Activated CD8-positive, alpha-beta T cell treated with anti-CD3 and anti-CD28 coated beads for 36 hours (primary cell): ENCODE measurements at regions of chr5 and their contacts with region 1.

Region 1: GRCh38 chr5:119267958-119268386 is 87.8 kb upstream of the TNFAIP8 start:
- DNase-seq: peak; percentile 97
- ATAC-seq: peak; percentile 80
- H3K4me3 Mint-ChIP-seq: peak overlapping the region; percentile 95
- H3K27ac Mint-ChIP-seq: peak overlapping the region; percentile 96
- H3K4me1 Mint-ChIP-seq: peaks cover 65% of the 10 kb centered on the region
- H3K27me3 Mint-ChIP-seq: no peaks in the 10 kb centered on the region
- CTCF ChIP-seq: peak; percentile 91

Region 2: DNA sequence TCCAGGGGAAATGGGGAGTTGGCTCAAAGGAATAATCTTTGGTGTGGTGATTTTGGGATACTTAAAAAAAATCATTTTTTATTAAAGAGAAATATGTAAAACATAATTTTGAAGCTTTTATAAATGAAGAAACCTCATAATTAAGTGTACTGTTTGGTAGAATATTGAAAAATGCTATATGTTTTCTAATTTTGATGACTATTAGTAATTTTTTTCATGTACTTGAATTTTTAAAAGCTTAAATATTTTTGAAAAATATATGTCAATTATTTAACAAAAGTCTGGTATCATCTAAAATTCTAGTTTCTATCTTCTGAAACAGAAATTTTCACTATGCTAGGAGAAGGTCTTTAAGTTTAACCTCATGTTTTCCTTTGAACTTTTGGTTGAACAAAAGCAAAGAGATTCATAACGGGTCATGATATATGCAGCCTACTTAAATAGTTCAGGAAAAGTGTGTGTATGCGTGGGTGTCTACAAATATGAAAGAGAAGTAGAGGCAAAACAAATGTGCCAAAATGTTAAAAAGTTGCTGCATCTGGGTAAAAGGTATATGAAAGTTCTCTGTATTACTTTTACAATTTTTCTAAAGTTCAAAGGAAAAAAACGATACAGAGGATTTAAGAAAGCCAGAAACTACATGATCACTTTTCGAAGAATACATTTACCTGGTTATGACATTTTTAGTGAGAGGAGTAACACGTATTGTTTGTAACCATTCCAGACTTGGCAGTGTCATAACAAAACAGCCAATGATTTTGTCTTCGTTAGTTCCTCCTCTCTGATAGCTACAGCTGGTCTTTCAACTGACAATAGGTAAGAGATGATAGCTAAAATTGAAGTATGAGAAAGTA is 29.5 kb before region 1 on chr5:
- CTCF ChIA-PET with region 1: interaction called, 18 read pairs
- POLR2A ChIA-PET with region 1: no interaction called
- intact Hi-C with region 1: no loop called
- DNase-seq: no peak
- ATAC-seq: peak; percentile 85
- H3K4me3 Mint-ChIP-seq: peak overlapping the region; percentile 53
- H3K27ac Mint-ChIP-seq: peak overlapping the region; percentile 82
- H3K4me1 Mint-ChIP-seq: peaks cover 23% of the 10 kb centered on the region
- H3K27me3 Mint-ChIP-seq: no peaks in the 10 kb centered on the region
- CTCF ChIP-seq: no peak

Region 3: DNA sequence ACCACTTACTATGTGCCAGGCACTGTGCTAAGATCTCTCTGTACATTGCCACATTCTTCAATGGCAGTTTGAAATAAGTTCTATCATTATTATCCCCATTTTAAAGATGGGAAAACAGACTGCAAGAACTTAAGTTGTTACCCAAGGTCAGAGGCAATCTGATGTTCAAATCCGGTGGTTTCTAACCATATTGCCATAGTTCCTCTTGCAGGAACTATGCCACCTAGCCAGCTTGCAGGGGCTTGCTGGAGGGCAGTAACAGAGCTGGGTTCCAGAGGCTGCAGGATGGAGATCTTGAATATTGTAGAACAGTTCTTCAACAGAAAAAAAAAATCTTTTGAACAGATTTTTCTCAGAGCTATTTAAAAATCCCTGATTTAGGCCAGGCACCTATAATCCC is 16.1 kb after region 1 on chr5:
- CTCF ChIA-PET with region 1: interaction called, 13 read pairs
- POLR2A ChIA-PET with region 1: interaction called, 3 read pairs
- intact Hi-C with region 1: no loop called
- DNase-seq: no peak
- ATAC-seq: no peak
- H3K4me3 Mint-ChIP-seq: no peak overlapping the region
- H3K27ac Mint-ChIP-seq: peak overlapping the region; percentile 81
- H3K4me1 Mint-ChIP-seq: peaks cover 99% of the 10 kb centered on the region
- H3K27me3 Mint-ChIP-seq: no peaks in the 10 kb centered on the region
- CTCF ChIP-seq: no peak

Region 4: GRCh38 chr5:119302916-119303897 is 35.2 kb after region 1 on chr5:
- CTCF ChIA-PET with region 1: interaction called, 11 read pairs
- POLR2A ChIA-PET with region 1: interaction called, 3 read pairs
- intact Hi-C with region 1: loop called (anchors 2 kb)
- DNase-seq: no peak
- ATAC-seq: peak; percentile 46
- H3K4me3 Mint-ChIP-seq: no peak overlapping the region
- H3K27ac Mint-ChIP-seq: peak overlapping the region; percentile 88
- H3K4me1 Mint-ChIP-seq: peaks cover 91% of the 10 kb centered on the region
- H3K27me3 Mint-ChIP-seq: no peaks in the 10 kb centered on the region
- CTCF ChIP-seq: no peak

Region 5: GRCh38 chr5:119315516-119315949 is 47.6 kb after region 1 on chr5:
- CTCF ChIA-PET with region 1: interaction called, 15 read pairs
- POLR2A ChIA-PET with region 1: interaction called, 4 read pairs
- intact Hi-C with region 1: no loop called
- DNase-seq: peak; percentile 84
- ATAC-seq: peak; percentile 79
- H3K4me3 Mint-ChIP-seq: peak overlapping the region; percentile 38
- H3K27ac Mint-ChIP-seq: peak overlapping the region; percentile 81
- H3K4me1 Mint-ChIP-seq: peaks cover 93% of the 10 kb centered on the region
- H3K27me3 Mint-ChIP-seq: no peaks in the 10 kb centered on the region
- CTCF ChIP-seq: peak; percentile 70

Region 6: DNA sequence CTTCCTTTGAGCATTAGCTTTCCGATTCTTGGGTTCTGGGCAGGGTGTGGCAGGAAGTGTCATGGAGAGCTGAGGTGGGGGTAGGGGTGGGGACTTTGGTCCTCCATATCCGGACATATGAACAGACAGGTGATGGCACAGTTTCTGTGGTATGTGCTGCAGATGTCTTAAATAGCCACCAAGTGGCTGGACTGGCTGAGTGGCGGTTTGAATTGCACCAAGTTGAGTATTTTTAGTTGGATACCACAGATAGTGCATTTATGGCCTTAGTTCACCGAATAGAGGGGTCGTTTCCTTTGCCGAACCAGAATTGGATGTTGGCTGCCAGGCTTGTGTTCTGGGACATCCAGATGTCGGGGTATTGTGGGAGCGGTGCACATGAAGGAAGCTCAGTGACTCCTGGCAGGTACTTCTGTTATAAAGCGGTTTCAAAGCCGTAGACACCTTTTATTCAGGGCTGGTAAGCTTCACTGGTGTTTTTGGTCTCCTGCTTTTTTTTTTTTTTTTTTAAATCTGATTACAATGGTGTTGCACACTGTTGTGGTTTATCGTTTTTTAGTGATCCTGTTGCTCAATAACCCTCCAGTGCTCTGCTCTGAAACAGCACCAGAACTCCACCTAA is 72.7 kb after region 1 on chr5:
- CTCF ChIA-PET with region 1: interaction called, 8 read pairs
- POLR2A ChIA-PET with region 1: interaction called, 12 read pairs
- intact Hi-C with region 1: no loop called
- DNase-seq: peak; percentile 83
- ATAC-seq: peak; percentile 38
- H3K4me3 Mint-ChIP-seq: peak overlapping the region; percentile 73
- H3K27ac Mint-ChIP-seq: peak overlapping the region; percentile 95
- H3K4me1 Mint-ChIP-seq: peaks cover 94% of the 10 kb centered on the region
- H3K27me3 Mint-ChIP-seq: no peaks in the 10 kb centered on the region
- CTCF ChIP-seq: no peak

Region 7: GRCh38 chr5:119445544-119445943 is 177.6 kb after region 1 on chr5:
- CTCF ChIA-PET with region 1: no interaction called
- POLR2A ChIA-PET with region 1: no interaction called
- intact Hi-C with region 1: no loop called
- DNase-seq: no peak
- ATAC-seq: no peak
- H3K4me3 Mint-ChIP-seq: no peak overlapping the region
- H3K27ac Mint-ChIP-seq: no peak overlapping the region
- H3K4me1 Mint-ChIP-seq: no peaks in the 10 kb centered on the region
- H3K27me3 Mint-ChIP-seq: no peaks in the 10 kb centered on the region
- CTCF ChIP-seq: no peak